Activated CD4-positive, alpha-beta memory T cell treated with anti-CD3 and anti-CD28 coated beads, Interleukin-2, amount 10 ng/mL, durations not matched to agents 7 days and 5 days (primary cell): ENCODE measurements at regions of chr17 and their contacts with region 1.

Region 1: GRCh38 chr17:74212913-74213791 is at the start of gene TTYH2:
- DNase-seq: peak; percentile 82
- H3K4me3 Mint-ChIP-seq: peak within 1 kb of the TSS; percentile 82
- H3K27ac Mint-ChIP-seq: peak within 1 kb of the TSS; percentile 77
- H3K4me1 Mint-ChIP-seq: peaks cover 76% of the 10 kb centered on the region
- H3K27me3 Mint-ChIP-seq: no peaks in the 10 kb centered on the region
- total RNA-seq, gene TTYH2: 23.8 to 25.6 TPM

Region 2: DNA sequence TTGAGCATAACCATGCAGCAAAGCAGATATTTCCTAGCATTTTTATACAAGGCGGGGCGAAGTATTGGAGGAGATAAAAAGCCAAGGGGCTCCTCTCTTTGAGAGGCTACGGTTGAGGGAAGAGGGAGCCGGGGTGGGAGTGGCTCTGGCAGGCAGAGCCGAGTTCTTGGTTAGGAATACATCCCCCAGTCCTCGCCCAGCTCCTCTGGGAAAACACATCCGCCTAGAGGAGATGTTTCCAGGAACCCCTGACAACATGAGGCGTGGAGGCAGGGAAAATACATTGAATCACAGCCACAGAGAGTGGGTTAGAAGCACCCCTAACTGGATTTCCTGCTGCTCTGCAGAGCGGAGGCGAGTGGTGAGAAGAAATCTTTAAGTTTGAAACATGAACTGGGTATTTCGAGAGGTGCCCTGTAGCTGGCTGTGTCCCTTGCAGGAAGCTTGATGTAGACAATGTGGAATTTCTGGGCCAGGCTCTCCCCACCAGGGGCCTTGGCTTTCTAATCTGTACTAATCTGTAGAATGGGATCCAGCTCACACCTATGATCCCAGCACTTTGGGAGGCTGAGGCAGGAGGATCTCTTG is 27.6 kb after region 1 on chr17:
- CTCF ChIA-PET with region 1: no interaction called
- POLR2A ChIA-PET with region 1: no interaction called
- DNase-seq: no peak
- H3K4me3 Mint-ChIP-seq: no peak overlapping the region
- H3K27ac Mint-ChIP-seq: no peak overlapping the region
- H3K4me1 Mint-ChIP-seq: no peaks in the 10 kb centered on the region
- H3K27me3 Mint-ChIP-seq: no peaks in the 10 kb centered on the region

Region 3: GRCh38 chr17:74280093-74280513 is 67.0 kb after region 1 on chr17:
- CTCF ChIA-PET with region 1: interaction called, 4 read pairs
- POLR2A ChIA-PET with region 1: interaction called, 19 read pairs
- DNase-seq: peak; percentile 85
- H3K4me3 Mint-ChIP-seq: no peak overlapping the region
- H3K27ac Mint-ChIP-seq: peak overlapping the region; percentile 100
- H3K4me1 Mint-ChIP-seq: peaks cover 83% of the 10 kb centered on the region
- H3K27me3 Mint-ChIP-seq: no peaks in the 10 kb centered on the region

Region 4: DNA sequence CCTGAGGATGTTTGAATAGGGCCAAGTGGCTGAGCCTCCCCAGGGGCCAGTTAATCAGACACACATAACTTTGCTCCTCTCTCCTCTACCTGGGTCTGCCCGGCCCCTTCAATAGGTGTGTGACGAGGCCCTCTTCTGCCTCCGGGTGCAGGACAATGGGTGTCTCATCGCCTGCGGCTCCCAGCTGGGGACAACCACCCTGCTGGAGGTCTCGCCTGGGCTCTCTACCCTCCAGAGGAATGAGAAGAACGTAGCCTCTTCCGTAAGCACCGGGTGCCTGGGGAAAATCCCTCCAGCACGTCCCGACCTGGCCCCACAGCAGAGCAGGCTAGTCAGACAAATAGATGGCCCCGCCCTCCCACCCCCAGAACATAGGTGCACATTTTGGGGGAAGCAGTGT is 96.8 kb after region 1 on chr17:
- CTCF ChIA-PET with region 1: no interaction called
- POLR2A ChIA-PET with region 1: no interaction called
- DNase-seq: no peak
- H3K4me3 Mint-ChIP-seq: no peak overlapping the region
- H3K27ac Mint-ChIP-seq: no peak overlapping the region
- H3K4me1 Mint-ChIP-seq: peaks cover 24% of the 10 kb centered on the region
- H3K27me3 Mint-ChIP-seq: peaks cover 4% of the 10 kb centered on the region